GM10248 (cell line): ENCODE measurements at regions of chr1 and their contacts with region 1.

Region 1: GRCh38 chr1:9110669-9111356 is 18.1 kb downstream of the GPR157 start:
- DNase-seq: peak; percentile 87
- CTCF ChIP-seq: peak; percentile 94

Region 2: GRCh38 chr1:8765198-8765597 is 345.6 kb before region 1 on chr1:
- CTCF ChIA-PET with region 1: no interaction called
- POLR2A ChIA-PET with region 1: no interaction called
- DNase-seq: no peak
- CTCF ChIP-seq: no peak

Region 3: DNA sequence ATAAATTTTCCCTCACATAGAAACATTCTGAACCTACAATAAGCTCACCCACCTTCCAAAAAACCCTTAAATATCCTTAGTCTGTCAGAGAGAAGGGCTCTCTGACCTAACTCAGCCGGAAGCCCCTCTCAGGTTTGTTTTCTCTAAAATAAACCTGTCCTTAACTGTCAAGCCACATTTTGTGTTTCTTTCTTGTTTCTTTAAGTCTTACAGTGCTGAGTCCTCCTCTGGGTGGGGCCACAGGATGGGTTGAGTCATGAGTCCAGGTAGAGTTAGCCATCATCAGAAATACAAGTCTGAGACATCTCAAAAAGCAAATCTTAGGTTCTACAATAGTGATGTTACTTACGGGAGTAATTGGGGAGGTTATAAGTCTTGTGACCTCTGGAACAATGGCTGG is 15.0 kb before region 1 on chr1:
- CTCF ChIA-PET with region 1: interaction called, 23 read pairs
- POLR2A ChIA-PET with region 1: no interaction called
- DNase-seq: no peak
- CTCF ChIP-seq: no peak

Region 4: DNA sequence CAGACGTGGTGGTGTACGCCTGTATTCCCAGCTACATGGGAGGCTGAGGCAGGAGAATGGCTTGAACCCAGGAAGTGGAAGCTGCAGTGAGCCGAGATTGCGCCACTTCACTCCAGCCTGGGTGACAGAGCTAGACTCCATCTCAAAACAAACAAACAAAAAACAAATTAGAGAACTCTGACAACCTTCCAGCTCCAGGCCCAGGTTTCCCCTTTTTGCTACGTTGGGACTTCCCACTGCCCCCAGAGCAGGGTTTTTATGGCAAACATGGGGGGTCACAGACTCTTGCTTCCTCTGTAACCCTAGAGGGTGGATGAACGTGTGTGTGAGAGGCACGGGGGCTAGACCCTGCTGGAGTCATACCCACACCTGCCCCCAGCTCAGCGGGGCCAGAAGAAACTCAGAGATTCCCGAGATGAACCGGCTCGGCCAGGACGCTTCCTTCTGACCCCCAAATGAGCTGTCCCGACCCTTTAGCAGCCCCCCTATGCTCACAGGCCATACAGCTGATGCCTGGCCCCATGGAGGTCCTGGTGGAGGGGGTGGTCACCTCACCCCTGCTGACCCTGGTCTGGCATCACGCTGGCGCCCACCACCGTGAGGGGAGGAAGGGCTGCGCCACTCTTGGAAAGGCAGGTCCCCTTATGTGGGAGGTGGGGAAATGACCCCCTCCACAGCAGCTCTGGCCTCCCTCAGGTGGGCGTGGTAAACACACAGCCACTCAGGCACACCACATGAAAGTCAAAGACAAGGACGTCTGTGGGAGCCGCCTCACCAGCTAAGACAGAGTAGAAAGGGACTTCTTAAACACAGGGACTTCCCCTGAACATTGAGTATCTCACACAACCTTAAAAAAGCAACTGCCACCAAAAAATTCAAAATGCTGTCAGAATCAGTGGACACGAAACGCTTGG is 10.9 kb after region 1 on chr1:
- CTCF ChIA-PET with region 1: interaction called, 79 read pairs
- POLR2A ChIA-PET with region 1: no interaction called
- DNase-seq: peak; percentile 78
- CTCF ChIP-seq: no peak

Region 5: DNA sequence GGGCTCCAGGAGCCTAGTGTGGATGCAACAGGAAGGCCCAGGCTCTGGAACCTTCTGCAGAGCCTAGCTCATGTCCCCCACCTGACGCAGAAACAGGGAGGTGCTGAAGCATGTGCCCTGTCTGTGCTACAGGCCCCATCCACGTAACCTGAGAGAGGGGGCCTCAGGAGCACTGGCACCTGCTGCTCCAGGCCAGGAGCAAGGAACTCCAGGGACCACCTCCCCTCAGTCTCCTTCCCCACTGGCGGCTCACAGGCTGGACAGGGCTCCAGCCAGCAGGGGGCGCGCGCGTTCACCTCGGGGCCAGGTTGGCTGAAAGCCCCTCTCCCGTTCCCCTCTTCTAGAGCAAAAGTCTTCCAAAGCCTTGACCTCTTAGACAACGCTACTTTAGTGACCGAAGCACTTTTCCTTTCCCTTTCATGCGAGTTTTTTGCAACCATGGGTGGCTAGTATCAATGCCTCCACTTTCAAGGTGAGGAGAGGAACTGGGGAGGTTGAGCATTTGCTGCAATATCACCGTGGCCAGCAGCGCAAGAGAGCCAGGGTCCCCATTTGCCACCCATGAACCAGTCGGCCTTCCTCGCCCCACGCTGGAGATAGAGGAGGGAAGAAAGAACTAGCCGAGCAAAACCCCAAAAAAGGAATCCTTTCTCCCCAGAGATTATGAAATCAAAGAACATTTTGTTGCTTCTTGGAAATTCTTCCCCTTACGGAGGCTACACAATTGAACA is 70.5 kb after region 1 on chr1:
- CTCF ChIA-PET with region 1: interaction called, 24 read pairs
- POLR2A ChIA-PET with region 1: interaction called, 10 read pairs
- DNase-seq: peak; percentile 84
- CTCF ChIP-seq: peak; percentile 99

Region 6: GRCh38 chr1:9196129-9197040 is 85.6 kb after region 1 on chr1:
- CTCF ChIA-PET with region 1: interaction called, 84 read pairs
- POLR2A ChIA-PET with region 1: no interaction called
- DNase-seq: peak; percentile 74
- CTCF ChIP-seq: peak; percentile 82

Region 7: DNA sequence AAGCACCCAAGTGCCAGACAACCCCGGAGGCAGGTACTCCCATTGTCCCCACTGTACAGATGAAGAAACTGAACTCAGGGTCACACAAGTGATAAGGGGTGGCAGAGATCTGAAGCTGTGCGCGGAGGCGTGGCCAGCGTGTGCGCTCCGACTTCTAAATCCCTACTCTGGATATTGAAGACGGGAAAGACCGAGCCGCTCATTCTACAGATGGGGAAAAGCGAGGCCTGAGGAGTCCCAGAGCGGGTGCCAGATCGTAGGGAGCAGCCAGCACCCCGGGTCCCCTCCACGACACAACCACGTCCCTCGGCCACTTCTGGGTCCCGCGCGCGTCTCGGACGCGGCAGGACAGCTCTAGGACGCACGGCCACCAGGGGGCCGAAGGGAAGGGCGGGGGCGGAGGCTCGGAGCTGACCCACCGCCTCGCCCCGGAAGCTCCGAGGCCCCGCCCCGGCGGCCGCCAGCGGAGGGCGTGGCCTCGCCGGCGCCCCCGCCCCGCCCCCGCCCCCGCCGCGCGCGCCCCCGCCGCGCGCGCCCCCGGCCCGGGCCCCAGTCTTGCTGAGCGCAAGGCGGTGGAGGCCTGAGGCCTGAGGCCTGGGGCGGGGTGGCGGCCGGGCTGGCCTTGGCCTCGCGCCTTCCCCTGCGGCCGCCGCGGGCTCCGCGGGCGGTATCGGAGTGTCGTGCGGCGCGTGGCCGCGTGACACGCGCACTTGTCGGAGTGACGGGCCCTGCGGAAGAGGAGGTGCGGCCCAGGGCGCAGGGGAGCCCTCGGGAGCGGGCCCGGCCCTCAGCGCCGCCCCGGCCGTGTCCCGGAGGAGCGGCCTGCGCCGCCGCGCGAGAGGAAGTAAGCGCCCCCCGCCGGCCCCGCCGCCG is 123.6 kb after region 1 on chr1 and contains the start of gene H6PD:
- CTCF ChIA-PET with region 1: interaction called, 11 read pairs
- POLR2A ChIA-PET with region 1: no interaction called
- DNase-seq: peak; percentile 99
- CTCF ChIP-seq: peak; percentile 83